ENCODE measurements at regions of chr22 and their contacts with region 1.

Region 1: DNA sequence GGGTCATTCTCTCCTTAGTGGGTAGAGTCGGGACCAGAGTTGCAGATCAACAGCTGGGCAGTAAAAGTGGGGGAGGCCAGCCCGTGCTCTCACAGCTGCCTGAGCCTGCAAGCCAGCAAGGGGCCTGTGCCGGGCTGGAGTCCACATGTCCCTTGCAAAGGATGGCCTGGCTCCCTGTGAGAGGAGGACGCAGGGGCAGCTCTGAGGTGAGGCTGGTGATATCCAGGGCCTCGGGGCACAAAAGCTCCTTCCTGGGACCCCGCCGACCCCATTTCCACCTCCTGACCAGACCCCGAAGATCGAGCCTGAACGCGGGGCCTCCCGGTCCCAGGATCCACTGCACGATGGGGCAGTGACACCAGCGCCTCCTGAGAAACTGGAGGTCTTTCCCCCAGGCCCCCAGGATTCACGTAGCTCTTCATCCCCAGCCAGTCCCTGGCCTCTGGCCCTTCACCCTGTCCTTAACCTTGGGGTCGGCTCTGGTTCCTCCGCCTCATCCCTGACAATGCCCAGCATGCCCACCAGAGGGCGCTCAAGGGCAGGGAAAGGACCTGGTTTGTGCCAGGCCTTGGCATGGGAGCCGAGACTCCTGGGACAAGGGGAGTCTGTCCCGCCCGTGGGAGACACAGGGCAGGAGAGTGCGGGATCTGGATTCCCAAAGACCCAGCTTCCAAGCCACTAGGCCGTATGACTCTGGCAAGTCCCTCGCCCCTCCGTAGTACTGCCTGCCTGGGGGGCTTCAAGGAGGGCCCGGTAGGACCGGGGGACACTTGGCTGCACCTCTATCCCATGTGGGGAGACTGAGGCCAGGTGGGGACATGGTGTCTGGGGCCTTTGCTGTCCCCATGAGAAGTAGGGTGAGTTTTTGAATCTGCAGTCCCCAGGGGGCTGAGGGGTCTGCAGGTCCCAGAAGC is 17.8 kb upstream of the WNT7B start:
- DNase-seq: peak; percentile 58
- H3K4me3 ChIP-seq: no peak overlapping the region
- H3K27ac ChIP-seq: no peak overlapping the region
- H3K4me1 ChIP-seq: peaks cover 33% of the 10 kb centered on the region
- CTCF ChIP-seq: peak; percentile 91

Region 2: DNA sequence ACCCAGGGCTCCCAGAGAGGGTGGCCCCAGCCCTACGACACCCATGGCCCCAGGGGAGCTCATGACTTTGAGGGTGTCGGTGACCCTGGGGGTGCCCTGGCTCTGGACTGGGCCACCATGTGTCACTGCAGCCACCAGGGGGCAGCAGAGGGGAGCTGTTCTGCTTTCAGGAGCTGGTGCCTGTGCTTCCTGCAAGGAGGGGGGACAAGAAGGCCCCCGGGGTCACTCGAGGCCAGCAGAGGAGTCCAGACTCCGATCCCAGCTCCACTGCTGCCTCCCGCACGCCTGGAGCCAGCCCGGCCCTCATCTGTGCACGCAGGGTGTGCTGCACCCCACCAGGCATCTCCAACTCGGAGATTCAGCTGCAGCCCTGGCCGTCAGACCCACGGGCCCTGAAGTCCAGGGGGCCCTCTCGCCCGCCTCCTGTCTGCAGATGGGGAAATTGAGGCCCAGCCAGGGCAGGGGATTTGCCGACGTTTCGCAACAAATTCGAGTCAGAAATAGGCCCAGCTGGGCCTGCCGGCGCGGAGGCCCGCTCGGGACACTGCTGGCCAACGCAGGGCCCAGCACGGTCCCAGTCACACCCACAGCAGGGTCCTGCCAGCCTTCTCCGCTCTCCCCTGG is 11.7 kb after region 1 on chr22:
- CTCF ChIA-PET with region 1: interaction called, 18 read pairs
- POLR2A ChIA-PET with region 1: no interaction called
- intact Hi-C with region 1: no loop called
- DNase-seq: peak; percentile 83
- H3K4me3 ChIP-seq: no peak overlapping the region
- H3K27ac ChIP-seq: no peak overlapping the region
- H3K4me1 ChIP-seq: peaks cover 13% of the 10 kb centered on the region
- CTCF ChIP-seq: peak; percentile 94

Region 3: DNA sequence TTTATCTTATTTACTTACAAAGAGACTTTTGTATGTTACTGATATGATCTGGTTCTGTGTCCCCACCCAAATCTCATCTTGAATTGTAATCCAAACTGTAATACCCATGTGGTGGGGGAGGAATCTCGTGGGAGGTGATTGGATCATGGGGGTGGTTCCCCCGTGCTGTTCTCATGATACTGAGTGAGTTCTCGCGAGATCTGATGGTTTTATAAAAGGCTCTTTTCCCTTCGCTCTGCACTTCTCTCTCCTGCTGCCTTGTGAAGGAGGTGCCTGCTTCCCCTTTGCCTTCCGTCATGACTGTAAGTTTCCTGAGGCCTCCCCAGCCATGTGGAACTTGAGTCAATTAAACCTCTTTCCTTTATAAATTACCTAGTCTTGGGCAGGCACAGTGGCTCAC is 24.6 kb after region 1 on chr22:
- CTCF ChIA-PET with region 1: no interaction called
- POLR2A ChIA-PET with region 1: no interaction called
- intact Hi-C with region 1: no loop called
- DNase-seq: no peak
- H3K4me3 ChIP-seq: no peak overlapping the region
- H3K27ac ChIP-seq: no peak overlapping the region
- H3K4me1 ChIP-seq: no peaks in the 10 kb centered on the region
- CTCF ChIP-seq: no peak

Region 4: DNA sequence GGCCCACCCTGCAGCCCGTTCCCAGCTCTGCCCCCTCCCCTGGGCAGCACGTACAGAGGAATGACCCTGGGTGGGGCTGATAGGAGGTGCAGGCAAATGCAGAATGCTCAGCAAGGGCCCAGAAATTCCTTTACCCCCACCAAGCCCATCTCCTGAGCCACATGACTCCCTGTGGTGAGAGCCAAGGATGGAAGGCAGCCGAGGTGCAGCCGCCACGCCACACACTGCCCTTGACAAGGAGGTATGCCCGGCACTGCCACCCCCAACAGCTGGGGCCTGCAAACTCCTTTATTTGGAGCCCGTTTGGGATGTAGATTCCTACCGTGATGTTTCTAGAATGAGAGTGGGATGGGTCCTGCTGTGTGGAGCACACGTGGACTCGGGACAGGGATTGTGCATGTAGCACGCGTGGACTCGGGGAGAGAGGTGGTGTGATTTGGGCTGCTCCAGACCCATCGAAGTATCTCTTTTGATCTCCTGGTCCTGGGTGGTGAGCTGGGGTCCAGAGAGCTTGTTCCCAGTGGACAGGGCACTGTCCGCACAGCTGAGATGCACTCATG is 314.9 kb after region 1 on chr22:
- CTCF ChIA-PET with region 1: no interaction called
- POLR2A ChIA-PET with region 1: no interaction called
- intact Hi-C with region 1: loop called (anchors 10 kb)
- DNase-seq: no peak
- H3K4me3 ChIP-seq: no peak overlapping the region
- H3K27ac ChIP-seq: no peak overlapping the region
- H3K4me1 ChIP-seq: no peaks in the 10 kb centered on the region
- CTCF ChIP-seq: no peak

Measured in OCI-LY7 (cell line).